ENCODE measurements at regions of chr11 and their contacts with region 1.

Region 1: GRCh38 chr11:87037450-87038234 is at the start of gene TMEM135:
- DNase-seq: peak; percentile 91
- ATAC-seq: peak; percentile 95
- H3K4me3 ChIP-seq: peak within 1 kb of the TSS; percentile 72 to 88 (median 75)
- H3K4me3 Mint-ChIP-seq: peak within 1 kb of the TSS; percentile 97
- H3K27ac ChIP-seq: peak within 1 kb of the TSS; percentile 38 to 67
- H3K27ac Mint-ChIP-seq: peak within 1 kb of the TSS; percentile 83
- H3K4me1 ChIP-seq: peaks cover 25 to 27% of the 10 kb centered on the region in 2 donors
- H3K4me1 Mint-ChIP-seq: peaks cover 30% of the 10 kb centered on the region
- H3K27me3 ChIP-seq: no peaks in the 10 kb centered on the region
- H3K27me3 Mint-ChIP-seq: no peaks in the 10 kb centered on the region
- CTCF ChIP-seq: no peak
- total RNA-seq, gene TMEM135: 7.5 and 19.5 TPM in 2 replicates

Region 2: DNA sequence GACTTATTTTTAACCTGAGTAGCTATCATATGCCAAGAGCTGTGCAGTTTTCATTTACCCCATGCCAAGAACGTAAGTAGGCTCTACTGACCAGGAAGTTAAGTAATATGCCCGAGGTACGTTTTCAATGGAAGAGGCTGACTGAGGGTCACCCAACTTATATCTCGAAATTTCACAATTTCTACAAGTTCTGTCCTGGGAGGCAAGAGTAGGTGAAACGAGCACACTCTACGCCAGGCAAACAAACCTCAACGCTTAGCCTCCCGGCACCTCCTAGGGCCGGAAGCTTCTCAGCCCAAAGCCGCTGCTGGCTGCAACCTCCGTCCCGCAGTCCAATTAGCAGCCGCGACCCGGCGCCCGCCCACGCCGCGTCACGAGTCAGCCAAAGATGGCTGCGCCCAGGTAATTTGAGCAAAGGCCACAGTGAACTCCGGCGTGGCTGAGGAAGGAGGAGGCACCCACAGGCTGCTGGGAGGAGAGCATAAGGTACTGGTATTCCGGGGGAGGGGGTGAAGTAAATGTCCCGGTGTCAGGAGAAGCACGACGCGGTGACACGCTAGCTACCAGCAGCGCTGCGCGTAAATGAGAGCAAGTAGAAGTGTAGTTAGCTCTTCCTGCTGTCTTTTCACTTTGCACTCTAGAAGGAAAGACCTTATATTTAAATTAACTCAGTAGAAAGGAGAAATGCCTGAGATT is 1389.9 kb before region 1 on chr11 and contains the start of gene TMEM126A:
- CTCF ChIA-PET with region 1: no interaction called
- POLR2A ChIA-PET with region 1: no interaction called
- intact Hi-C with region 1: loop called (anchors 5 kb)
- DNase-seq: peak; percentile 91
- ATAC-seq: peak; percentile 99
- H3K4me3 ChIP-seq: peak within 1 kb of the TSS; percentile 79 to 87 (median 85)
- H3K4me3 Mint-ChIP-seq: peak within 1 kb of the TSS; percentile 89
- H3K27ac ChIP-seq: peak within 1 kb of the TSS; percentile 71 to 91
- H3K27ac Mint-ChIP-seq: peak within 1 kb of the TSS; percentile 93
- H3K4me1 ChIP-seq: peaks cover 12 to 13% of the 10 kb centered on the region in 2 donors
- H3K4me1 Mint-ChIP-seq: peaks cover 18% of the 10 kb centered on the region
- H3K27me3 ChIP-seq: peaks cover 0 to 12% (median 4%) of the 10 kb centered on the region in 4 experiments
- H3K27me3 Mint-ChIP-seq: peaks cover 19% of the 10 kb centered on the region
- CTCF ChIP-seq: no peak
- total RNA-seq, gene TMEM126A: 13.0 and 15.8 TPM in 2 replicates

Region 3: DNA sequence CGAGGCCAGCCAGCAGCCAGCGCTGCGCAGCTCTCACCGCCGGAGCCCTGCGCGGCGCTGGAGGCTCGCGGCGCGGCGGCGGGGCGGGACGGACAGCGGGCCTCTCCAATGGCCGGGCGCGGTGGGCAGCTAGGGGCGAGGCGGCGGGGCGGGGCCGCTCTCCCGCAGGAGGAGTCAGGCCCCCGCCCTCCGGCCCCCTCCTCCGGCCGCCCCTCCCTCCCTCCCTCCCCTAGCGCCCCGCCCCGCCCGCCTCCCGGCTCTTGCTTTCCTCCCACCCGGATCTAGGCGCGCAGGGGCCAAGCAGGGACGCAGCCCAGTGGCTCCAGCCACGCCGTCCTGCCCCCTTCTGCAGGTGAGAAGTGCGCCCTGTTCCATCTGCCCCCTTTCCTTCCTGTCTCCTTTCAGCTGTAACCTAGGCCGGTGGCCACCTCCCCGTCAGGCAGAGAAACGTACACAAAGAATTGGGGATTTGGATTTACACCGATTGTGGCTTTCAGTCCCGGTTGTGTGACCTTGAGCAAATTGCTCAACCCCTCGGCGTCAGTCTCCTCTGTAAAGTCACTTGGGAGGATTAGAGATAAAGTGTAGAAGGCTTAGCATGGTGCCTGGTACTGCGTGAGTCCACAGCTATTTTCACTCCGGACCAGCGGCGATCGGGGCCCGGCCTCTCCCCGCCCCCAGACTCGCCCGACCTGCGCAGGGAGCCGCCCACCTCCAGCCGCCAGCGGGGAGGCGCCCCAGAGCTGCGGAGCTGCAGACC is 82.1 kb before region 1 on chr11 and contains the start of gene FZD4:
- CTCF ChIA-PET with region 1: no interaction called
- POLR2A ChIA-PET with region 1: no interaction called
- intact Hi-C with region 1: loop called (anchors 2 kb)
- DNase-seq: peak; percentile 52
- ATAC-seq: peak; percentile 94
- H3K4me3 ChIP-seq: peak within 1 kb of the TSS; percentile 32 to 71 (median 59)
- H3K4me3 Mint-ChIP-seq: peak within 1 kb of the TSS; percentile 95
- H3K27ac ChIP-seq: no peak within 1 kb of the TSS
- H3K27ac Mint-ChIP-seq: peak within 1 kb of the TSS; percentile 5
- H3K4me1 ChIP-seq: peaks cover 11 to 17% of the 10 kb centered on the region in 2 donors
- H3K4me1 Mint-ChIP-seq: peaks cover 18% of the 10 kb centered on the region
- H3K27me3 ChIP-seq: peaks cover 0 to 16% (median 7%) of the 10 kb centered on the region in 4 experiments
- H3K27me3 Mint-ChIP-seq: peaks cover 23% of the 10 kb centered on the region
- CTCF ChIP-seq: no peak
- total RNA-seq, gene FZD4: 0.02 and 0.15 TPM in 2 replicates

Region 4: DNA sequence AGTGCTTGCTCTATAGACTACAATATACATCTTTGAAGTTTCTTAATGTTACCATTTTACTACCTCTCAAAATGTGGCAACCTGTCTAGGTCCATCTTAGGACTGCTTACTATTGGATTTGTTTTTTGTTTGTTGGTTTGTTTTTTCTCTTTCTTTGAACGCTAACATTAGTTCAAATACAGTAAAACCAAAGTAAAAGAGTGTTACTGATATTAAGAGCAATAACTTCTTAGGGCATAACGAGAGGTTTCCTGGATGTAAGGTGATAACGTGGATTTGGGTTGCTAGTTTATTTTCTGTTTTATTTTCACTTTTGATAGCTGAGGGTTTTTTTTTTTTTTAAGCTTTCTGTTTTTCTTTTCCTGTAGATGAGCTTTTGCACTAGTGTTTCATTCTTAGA is 43.7 kb after region 1 on chr11:
- CTCF ChIA-PET with region 1: no interaction called
- POLR2A ChIA-PET with region 1: no interaction called
- intact Hi-C with region 1: loop called (anchors 10 kb)
- DNase-seq: peak; percentile 31
- ATAC-seq: no peak
- H3K4me3 ChIP-seq: peak overlapping the region; percentile 20 to 79 (median 43)
- H3K4me3 Mint-ChIP-seq: peak overlapping the region; percentile 83
- H3K27ac ChIP-seq: peak overlapping the region in 1 of 2 donors; percentile 49
- H3K27ac Mint-ChIP-seq: peak overlapping the region; percentile 72
- H3K4me1 ChIP-seq: peaks cover 0 to 7% of the 10 kb centered on the region in 2 donors
- H3K4me1 Mint-ChIP-seq: peaks cover 9% of the 10 kb centered on the region
- H3K27me3 ChIP-seq: no peaks in the 10 kb centered on the region
- H3K27me3 Mint-ChIP-seq: no peaks in the 10 kb centered on the region
- CTCF ChIP-seq: no peak

Measured in B cell (primary cell).